Mucosa of descending colon (tissue), 3 donors: ENCODE measurements at regions of chr11 and their contacts with region 1.

Region 1: GRCh38 chr11:61627567-61628445 is 46.9 kb upstream of the SYT7 start:
- DNase-seq: peak in 2 of 3 donors; percentile 77 to 81
- ATAC-seq: peak; percentile 83
- H3K4me3 ChIP-seq: no peak overlapping the region
- H3K4me1 ChIP-seq: peaks cover 7% of the 10 kb centered on the region
- CTCF ChIP-seq: peak; percentile 81

Region 2: GRCh38 chr11:61581030-61581928 is 46.5 kb before region 1 on chr11 and contains the start of gene SYT7:
- intact Hi-C with region 1: loop called in 1 of 2 experiments (anchors 5 kb)
- DNase-seq: peak; percentile 96 to 99 (median 97)
- ATAC-seq: peak; percentile 91
- H3K4me3 ChIP-seq: no peak within 1 kb of the TSS
- H3K4me1 ChIP-seq: peaks cover 9% of the 10 kb centered on the region
- CTCF ChIP-seq: no peak
- total RNA-seq, gene SYT7: 8.2 to 19.7 (median 19.0) TPM

Region 3: GRCh38 chr11:61598886-61599868 is 28.6 kb before region 1 on chr11:
- intact Hi-C with region 1: no loop called
- DNase-seq: no peak
- ATAC-seq: no peak
- H3K4me3 ChIP-seq: no peak overlapping the region
- H3K4me1 ChIP-seq: peaks cover 7% of the 10 kb centered on the region
- CTCF ChIP-seq: no peak